Caco-2 (cell line): ENCODE measurements at regions of chr4 and their contacts with region 1.

Region 1: GRCh38 chr4:183504064-183504929 is 561 bp upstream of the ING2 start:
- DNase-seq: peak; percentile 98 to 99
- H3K4me3 ChIP-seq: peak overlapping the region; percentile 73
- H3K4me3 Mint-ChIP-seq: peak overlapping the region; percentile 96
- H3K27ac Mint-ChIP-seq: peak overlapping the region; percentile 97
- H3K4me1 ChIP-seq: peaks cover 30% of the 10 kb centered on the region
- H3K4me1 Mint-ChIP-seq: peaks cover 12% of the 10 kb centered on the region
- H3K27me3 ChIP-seq: no peaks in the 10 kb centered on the region
- H3K27me3 Mint-ChIP-seq: no peaks in the 10 kb centered on the region
- CTCF ChIP-seq: no peak

Region 2: GRCh38 chr4:183030309-183030708 is 474.0 kb before region 1 on chr4:
- CTCF ChIA-PET with region 1: no interaction called
- POLR2A ChIA-PET with region 1: no interaction called
- intact Hi-C with region 1: no loop called
- DNase-seq: no peak
- H3K4me3 ChIP-seq: no peak overlapping the region
- H3K4me3 Mint-ChIP-seq: no peak overlapping the region
- H3K27ac Mint-ChIP-seq: no peak overlapping the region
- H3K4me1 ChIP-seq: no peaks in the 10 kb centered on the region
- H3K4me1 Mint-ChIP-seq: no peaks in the 10 kb centered on the region
- H3K27me3 ChIP-seq: no peaks in the 10 kb centered on the region
- H3K27me3 Mint-ChIP-seq: no peaks in the 10 kb centered on the region
- CTCF ChIP-seq: no peak

Region 3: DNA sequence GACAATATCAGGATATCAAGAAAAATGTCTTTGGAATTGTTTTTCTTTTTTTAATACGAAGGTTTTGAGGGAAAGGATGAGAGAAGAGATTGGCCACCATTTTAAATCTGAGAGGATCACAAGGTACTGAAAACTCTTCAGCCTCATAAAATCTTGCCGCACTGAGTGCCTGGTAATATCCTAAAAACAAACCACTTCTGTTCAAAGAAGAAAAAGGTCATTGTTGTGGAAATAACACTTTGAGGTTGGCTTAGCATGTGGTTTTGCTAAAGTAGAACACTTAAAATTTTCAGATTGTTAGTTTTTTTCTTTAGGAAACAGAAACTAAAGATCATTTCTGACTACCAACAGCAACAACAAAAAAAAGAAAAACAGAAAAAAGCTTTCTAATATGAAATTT is 183.2 kb before region 1 on chr4:
- CTCF ChIA-PET with region 1: no interaction called
- POLR2A ChIA-PET with region 1: no interaction called
- intact Hi-C with region 1: no loop called
- DNase-seq: no peak
- H3K4me3 ChIP-seq: no peak overlapping the region
- H3K4me3 Mint-ChIP-seq: no peak overlapping the region
- H3K27ac Mint-ChIP-seq: no peak overlapping the region
- H3K4me1 ChIP-seq: no peaks in the 10 kb centered on the region
- H3K4me1 Mint-ChIP-seq: no peaks in the 10 kb centered on the region
- H3K27me3 ChIP-seq: no peaks in the 10 kb centered on the region
- H3K27me3 Mint-ChIP-seq: no peaks in the 10 kb centered on the region
- CTCF ChIP-seq: no peak

Region 4: DNA sequence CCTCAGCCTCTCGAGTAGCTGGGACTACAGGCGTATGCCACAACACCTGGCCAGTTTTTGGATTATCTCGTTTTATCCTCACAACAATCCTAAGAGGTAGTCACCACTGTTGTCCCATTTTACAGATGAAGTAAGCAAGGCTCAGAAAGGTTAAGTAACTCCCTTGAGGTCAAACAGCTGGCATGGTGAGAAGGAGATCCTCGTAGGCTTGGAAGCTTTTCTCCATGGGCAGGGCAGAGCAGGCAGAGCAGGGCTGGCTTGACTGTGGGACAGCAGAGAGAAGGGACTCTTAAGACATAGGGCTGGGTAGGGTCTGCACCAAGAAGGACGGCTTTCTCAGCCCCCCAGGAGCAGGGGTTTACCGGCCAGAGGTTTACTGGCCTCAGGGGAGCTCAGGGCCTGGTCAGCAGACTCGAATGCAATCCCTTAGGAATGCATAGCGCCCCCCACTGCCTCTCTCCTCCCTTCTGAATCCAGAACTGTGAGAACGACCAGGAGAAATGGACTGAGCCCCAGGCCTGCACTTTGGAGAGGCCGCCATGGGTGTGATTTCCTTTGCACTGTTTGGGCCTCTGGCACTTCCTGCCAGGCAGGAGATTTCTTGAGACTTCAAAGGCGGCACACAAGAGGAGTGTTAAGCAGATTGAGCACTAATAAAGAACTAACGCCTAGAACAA is 73.8 kb before region 1 on chr4:
- CTCF ChIA-PET with region 1: no interaction called
- POLR2A ChIA-PET with region 1: no interaction called
- intact Hi-C with region 1: no loop called
- DNase-seq: no peak
- H3K4me3 ChIP-seq: no peak overlapping the region
- H3K4me3 Mint-ChIP-seq: no peak overlapping the region
- H3K27ac Mint-ChIP-seq: peak overlapping the region; percentile 24
- H3K4me1 ChIP-seq: no peaks in the 10 kb centered on the region
- H3K4me1 Mint-ChIP-seq: no peaks in the 10 kb centered on the region
- H3K27me3 ChIP-seq: no peaks in the 10 kb centered on the region
- H3K27me3 Mint-ChIP-seq: no peaks in the 10 kb centered on the region
- CTCF ChIP-seq: no peak

Region 5: GRCh38 chr4:183471946-183472708 is 32.2 kb before region 1 on chr4:
- CTCF ChIA-PET with region 1: no interaction called
- POLR2A ChIA-PET with region 1: no interaction called
- intact Hi-C with region 1: loop called (anchors 1 kb)
- DNase-seq: peak; percentile 81 to 87
- H3K4me3 ChIP-seq: no peak overlapping the region
- H3K4me3 Mint-ChIP-seq: no peak overlapping the region
- H3K27ac Mint-ChIP-seq: no peak overlapping the region
- H3K4me1 ChIP-seq: peaks cover 14% of the 10 kb centered on the region
- H3K4me1 Mint-ChIP-seq: peaks cover 7% of the 10 kb centered on the region
- H3K27me3 ChIP-seq: no peaks in the 10 kb centered on the region
- H3K27me3 Mint-ChIP-seq: no peaks in the 10 kb centered on the region
- CTCF ChIP-seq: peak; percentile 72

Region 6: DNA sequence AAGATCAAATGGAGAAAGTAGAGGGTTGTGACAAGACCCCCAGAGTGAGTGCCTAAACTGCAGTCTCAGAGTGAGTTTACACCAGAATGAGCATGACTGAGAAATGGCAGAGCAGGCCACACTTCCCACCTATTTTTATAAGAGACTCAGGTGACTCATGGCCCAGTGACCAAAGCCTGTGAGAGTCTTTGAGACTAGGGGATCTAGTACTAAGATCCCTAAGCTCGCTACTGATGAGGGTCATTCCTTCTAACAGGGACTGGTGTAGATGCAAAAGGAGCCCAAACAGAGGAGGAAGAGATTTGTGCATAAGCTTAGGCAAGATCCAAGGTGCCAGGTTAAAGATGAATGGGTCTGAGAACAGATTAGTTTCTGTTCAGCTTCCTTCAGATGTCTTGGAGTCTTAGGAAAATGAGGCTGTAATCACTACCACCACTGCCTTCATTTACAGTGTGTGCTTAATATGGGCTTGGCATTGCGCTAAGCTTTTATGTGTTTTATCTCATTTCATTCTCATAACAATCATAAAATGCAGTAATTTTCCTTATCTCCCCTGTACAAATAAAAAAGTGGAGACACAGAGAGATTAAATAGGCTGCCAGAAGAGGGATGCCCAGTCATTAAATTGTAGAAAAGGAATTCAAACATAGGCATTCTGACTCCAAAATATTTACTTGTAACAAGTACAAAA is 91.9 kb after region 1 on chr4:
- CTCF ChIA-PET with region 1: interaction called, 3 read pairs
- POLR2A ChIA-PET with region 1: interaction called, 5 read pairs
- intact Hi-C with region 1: loop called (anchors 1 kb)
- DNase-seq: peak in 1 of 2 experiments; percentile 16
- H3K4me3 ChIP-seq: no peak overlapping the region
- H3K4me3 Mint-ChIP-seq: no peak overlapping the region
- H3K27ac Mint-ChIP-seq: no peak overlapping the region
- H3K4me1 ChIP-seq: 0 out of 2 replicates have a peak, but pooled peaks cover 3% of the 10 kb centered on the region
- H3K4me1 Mint-ChIP-seq: peaks cover 10% of the 10 kb centered on the region
- H3K27me3 ChIP-seq: no peaks in the 10 kb centered on the region
- H3K27me3 Mint-ChIP-seq: no peaks in the 10 kb centered on the region
- CTCF ChIP-seq: no peak

Region 7: DNA sequence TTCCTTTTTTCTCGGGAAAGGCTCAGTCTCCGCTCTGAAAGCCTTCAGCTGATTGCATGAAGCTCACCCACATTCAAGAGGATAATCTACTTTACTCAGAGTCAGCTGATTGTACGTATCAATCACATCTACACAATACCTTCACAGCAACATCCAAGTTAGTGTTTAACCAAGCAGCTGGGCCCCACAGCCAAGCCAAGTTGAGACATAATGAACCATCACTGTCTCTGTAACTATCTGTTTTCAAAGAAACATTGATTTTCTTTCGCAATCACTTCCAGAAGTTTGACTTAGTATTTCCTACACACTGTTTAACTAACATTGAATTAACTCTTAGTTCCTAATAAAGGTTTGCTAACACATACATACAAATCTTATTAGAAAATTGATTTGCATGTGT is 114.4 kb after region 1 on chr4:
- CTCF ChIA-PET with region 1: interaction called, 3 read pairs
- POLR2A ChIA-PET with region 1: no interaction called
- intact Hi-C with region 1: loop called (anchors 5 kb)
- DNase-seq: peak; percentile 49 to 57
- H3K4me3 ChIP-seq: no peak overlapping the region
- H3K4me3 Mint-ChIP-seq: peak overlapping the region; percentile 46
- H3K27ac Mint-ChIP-seq: no peak overlapping the region
- H3K4me1 ChIP-seq: peaks cover 15% of the 10 kb centered on the region
- H3K4me1 Mint-ChIP-seq: peaks cover 14% of the 10 kb centered on the region
- H3K27me3 ChIP-seq: no peaks in the 10 kb centered on the region
- H3K27me3 Mint-ChIP-seq: no peaks in the 10 kb centered on the region
- CTCF ChIP-seq: no peak